ENCODE measurements at regions of chr14 and their contacts with region 1.

Region 1: GRCh38 chr14:59438195-59438647 is 27.0 kb downstream of the GPR135 start:
- DNase-seq: peak; percentile 75
- H3K4me3 ChIP-seq: no peak overlapping the region
- H3K27ac ChIP-seq: peak overlapping the region; percentile 70
- H3K4me1 ChIP-seq: peaks cover 29% of the 10 kb centered on the region
- H3K27me3 ChIP-seq: no peaks in the 10 kb centered on the region
- CTCF ChIP-seq: no peak
- POLR2A ChIP-seq: no peak

Region 2: GRCh38 chr14:59126710-59127432 is 311.4 kb before region 1 on chr14:
- CTCF ChIA-PET with region 1: interaction called, 91 read pairs
- POLR2A ChIA-PET with region 1: no interaction called
- dilution Hi-C with region 1: no loop called
- intact Hi-C with region 1: no loop called
- DNase-seq: peak; percentile 64
- H3K4me3 ChIP-seq: no peak overlapping the region
- H3K27ac ChIP-seq: no peak overlapping the region
- H3K4me1 ChIP-seq: no peaks in the 10 kb centered on the region
- H3K27me3 ChIP-seq: peaks cover 5 to 6% of the 10 kb centered on the region in 2 experiments
- CTCF ChIP-seq: peak; percentile 58 to 60
- POLR2A ChIP-seq: no peak

Region 3: DNA sequence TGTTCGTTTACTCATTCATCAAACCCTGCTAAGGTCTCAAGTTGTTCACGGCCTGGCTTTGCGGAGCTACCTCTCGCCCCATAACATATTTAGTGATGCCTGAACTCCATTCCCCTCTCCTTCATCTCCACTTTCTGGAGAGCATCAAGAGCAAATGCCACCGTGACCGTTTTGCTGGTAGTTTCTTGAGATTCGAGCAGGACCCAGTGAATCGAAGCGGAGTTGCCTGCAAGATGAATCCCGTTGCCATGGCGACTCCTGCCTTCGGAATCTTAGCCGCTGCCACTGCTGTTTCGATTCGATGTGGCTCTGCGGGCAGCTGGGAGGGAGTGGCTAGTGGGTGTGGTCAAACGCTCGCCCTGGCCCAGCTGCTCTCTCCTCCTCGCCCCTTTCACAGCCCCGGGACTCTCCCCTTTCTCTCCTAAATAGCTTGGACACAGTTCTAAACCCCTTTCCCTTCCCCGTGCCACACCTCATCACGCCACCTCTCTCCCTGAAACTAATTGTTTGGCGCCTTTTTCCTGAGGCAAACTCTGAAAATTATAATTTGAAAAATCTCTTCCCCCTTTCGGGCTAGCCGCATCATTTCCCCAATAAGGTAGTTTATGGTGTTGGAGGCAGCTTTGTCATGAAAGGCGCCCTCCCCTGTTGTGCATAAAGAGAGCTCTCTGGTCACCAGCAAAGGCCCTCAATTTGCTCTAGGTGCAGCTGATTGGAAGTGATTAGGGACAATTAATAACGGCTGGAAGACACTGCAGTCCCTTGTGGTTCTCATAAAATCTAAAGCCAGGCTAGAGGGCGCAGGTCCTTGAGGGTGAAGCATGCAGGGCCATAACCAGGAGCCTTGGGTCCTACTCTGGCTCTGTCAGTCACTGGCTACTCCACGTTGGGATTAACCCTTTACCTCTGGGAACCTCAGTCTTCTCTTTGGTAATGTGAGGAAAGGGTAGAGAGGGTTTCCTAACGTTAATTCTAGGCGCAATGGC is 248.1 kb before region 1 on chr14:
- CTCF ChIA-PET with region 1: interaction called, 25 read pairs
- POLR2A ChIA-PET with region 1: no interaction called
- dilution Hi-C with region 1: no loop called
- intact Hi-C with region 1: no loop called
- DNase-seq: peak; percentile 80
- H3K4me3 ChIP-seq: peak overlapping the region; percentile 77 to 85 (median 78)
- H3K27ac ChIP-seq: peak overlapping the region; percentile 72
- H3K4me1 ChIP-seq: peaks cover 13% of the 10 kb centered on the region
- H3K27me3 ChIP-seq: peaks cover 11 to 24% of the 10 kb centered on the region in 2 experiments
- CTCF ChIP-seq: no peak
- POLR2A ChIP-seq: no peak

Region 4: GRCh38 chr14:59275653-59276052 is 162.6 kb before region 1 on chr14:
- CTCF ChIA-PET with region 1: no interaction called
- POLR2A ChIA-PET with region 1: no interaction called
- dilution Hi-C with region 1: no loop called
- intact Hi-C with region 1: loop called (anchors 2 kb)
- DNase-seq: peak; percentile 89
- H3K4me3 ChIP-seq: no peak overlapping the region
- H3K27ac ChIP-seq: peak overlapping the region; percentile 60
- H3K4me1 ChIP-seq: peaks cover 43% of the 10 kb centered on the region
- H3K27me3 ChIP-seq: no peaks in the 10 kb centered on the region
- CTCF ChIP-seq: no peak
- POLR2A ChIP-seq: no peak

Region 5: DNA sequence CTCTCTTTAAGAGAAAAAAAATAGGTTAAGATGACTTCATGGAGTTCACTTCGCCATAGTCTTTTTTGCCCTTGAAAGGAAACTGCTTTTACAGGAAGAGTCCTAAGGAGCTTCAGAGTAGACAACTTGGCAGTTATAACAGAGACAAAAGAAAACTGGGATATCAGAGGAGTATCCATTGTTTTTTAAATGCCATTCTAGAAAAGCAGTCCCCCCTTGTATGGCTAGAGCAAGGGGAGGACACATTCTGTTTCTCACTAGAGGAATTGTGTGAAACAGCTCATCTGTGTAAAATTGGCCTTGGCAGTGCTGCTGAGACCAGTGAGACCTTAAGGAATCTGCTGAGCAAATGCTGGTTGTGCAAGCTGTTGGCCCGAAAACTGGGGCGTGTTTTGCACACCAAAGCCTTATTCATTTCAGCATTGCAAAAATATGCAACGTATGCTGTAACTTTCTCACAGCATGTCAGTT is 101.0 kb before region 1 on chr14:
- CTCF ChIA-PET with region 1: no interaction called
- POLR2A ChIA-PET with region 1: no interaction called
- dilution Hi-C with region 1: no loop called
- intact Hi-C with region 1: loop called (anchors 2 kb)
- DNase-seq: peak; percentile 70
- H3K4me3 ChIP-seq: no peak overlapping the region
- H3K27ac ChIP-seq: peak overlapping the region; percentile 87
- H3K4me1 ChIP-seq: peaks cover 61% of the 10 kb centered on the region
- H3K27me3 ChIP-seq: no peaks in the 10 kb centered on the region
- CTCF ChIP-seq: no peak
- POLR2A ChIP-seq: no peak

Region 6: DNA sequence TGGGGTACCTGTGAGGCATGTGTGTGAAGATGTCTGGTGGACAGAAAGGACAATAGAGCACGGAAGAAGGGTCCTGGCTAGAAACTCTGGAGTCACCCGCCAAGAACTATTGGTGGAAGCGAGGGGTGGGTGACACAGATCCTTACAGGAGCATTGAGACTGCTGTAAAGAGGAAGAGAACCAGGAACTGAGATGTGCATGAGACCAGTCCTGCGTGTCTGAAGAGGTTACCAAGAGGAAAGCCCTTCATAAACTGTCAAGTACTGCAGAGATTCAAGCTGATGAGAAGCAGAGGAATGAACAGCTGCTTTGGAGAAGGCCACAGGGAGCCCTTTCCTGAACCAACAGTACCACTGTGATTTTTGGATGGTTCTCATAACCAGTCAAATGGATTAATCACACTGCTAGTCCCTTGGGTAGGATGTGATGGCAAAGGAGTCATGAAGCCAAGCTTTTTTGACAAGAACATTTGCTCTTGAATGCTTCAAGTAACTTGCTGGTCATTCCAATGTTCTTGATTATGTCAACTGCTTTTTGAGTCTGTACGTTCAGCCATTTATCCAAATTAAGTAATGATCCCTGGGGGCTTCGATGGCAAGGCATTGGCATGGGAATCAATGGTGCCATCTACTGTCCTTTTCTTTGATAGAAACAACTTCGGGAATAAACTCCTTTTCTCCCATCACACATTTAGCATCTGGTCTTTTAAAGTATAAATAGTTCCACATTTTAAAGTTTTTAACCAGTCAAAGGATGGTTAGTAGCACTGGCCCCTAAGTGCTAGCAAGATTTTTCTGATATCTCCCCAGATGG is 15.9 kb before region 1 on chr14:
- CTCF ChIA-PET with region 1: no interaction called
- POLR2A ChIA-PET with region 1: no interaction called
- dilution Hi-C with region 1: no loop called
- intact Hi-C with region 1: no loop called
- DNase-seq: peak; percentile 29
- H3K4me3 ChIP-seq: no peak overlapping the region
- H3K27ac ChIP-seq: no peak overlapping the region
- H3K4me1 ChIP-seq: no peaks in the 10 kb centered on the region
- H3K27me3 ChIP-seq: no peaks in the 10 kb centered on the region
- CTCF ChIP-seq: peak; percentile 4 to 9
- POLR2A ChIP-seq: no peak